ENCODE measurements at regions of chr17 and their contacts with region 1.

Region 1: DNA sequence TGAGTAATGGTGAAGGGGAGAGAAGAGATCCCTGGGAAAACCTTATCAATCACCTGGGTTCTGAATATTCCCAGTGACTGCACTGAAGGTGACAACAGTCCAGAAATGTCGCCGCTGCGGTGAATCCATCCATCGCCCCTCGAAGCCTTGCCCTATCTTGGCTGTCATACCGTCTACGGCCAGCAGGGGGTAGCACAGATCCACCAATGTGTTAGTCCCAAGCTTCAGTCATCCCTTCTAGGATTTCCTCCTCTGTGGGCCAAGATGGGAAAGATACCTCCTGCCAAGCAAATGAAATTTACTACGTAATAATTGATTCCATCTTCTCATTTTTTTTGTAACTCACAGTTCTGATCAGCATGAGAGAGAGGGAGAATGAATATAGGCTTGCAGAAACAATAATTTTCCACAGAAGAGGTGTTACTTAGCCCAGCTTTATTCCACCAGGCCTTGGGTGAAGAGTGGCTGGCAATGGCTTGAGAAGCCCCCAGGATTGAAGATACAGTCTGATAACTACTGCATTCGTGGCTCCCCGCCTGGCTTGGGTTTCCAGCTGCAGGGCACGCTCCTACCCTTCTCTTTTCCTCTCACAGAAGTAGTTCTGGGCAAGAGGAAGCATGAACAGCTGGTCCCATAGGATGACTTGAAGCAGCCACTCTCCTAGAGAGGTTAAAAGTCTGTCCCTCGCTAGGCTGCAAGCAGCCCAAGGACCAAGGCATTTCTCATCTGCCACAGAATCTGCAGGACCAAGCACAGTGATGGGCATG is 2.6 kb upstream of the FMNL1 start:
- DNase-seq: peak; percentile 86 to 92
- H3K4me3 ChIP-seq: no peak overlapping the region
- H3K4me3 Mint-ChIP-seq: no peak overlapping the region
- H3K27ac Mint-ChIP-seq: no peak overlapping the region
- H3K4me1 ChIP-seq: peaks cover 5% of the 10 kb centered on the region; the same call in 1 of the 2 replicates
- H3K4me1 Mint-ChIP-seq: no peaks in the 10 kb centered on the region
- H3K27me3 ChIP-seq: peaks cover 1% of the 10 kb centered on the region; the same call in 1 of the 2 replicates
- H3K27me3 Mint-ChIP-seq: peaks cover 17% of the 10 kb centered on the region
- CTCF ChIP-seq: peak; percentile 88 to 97

Region 2: DNA sequence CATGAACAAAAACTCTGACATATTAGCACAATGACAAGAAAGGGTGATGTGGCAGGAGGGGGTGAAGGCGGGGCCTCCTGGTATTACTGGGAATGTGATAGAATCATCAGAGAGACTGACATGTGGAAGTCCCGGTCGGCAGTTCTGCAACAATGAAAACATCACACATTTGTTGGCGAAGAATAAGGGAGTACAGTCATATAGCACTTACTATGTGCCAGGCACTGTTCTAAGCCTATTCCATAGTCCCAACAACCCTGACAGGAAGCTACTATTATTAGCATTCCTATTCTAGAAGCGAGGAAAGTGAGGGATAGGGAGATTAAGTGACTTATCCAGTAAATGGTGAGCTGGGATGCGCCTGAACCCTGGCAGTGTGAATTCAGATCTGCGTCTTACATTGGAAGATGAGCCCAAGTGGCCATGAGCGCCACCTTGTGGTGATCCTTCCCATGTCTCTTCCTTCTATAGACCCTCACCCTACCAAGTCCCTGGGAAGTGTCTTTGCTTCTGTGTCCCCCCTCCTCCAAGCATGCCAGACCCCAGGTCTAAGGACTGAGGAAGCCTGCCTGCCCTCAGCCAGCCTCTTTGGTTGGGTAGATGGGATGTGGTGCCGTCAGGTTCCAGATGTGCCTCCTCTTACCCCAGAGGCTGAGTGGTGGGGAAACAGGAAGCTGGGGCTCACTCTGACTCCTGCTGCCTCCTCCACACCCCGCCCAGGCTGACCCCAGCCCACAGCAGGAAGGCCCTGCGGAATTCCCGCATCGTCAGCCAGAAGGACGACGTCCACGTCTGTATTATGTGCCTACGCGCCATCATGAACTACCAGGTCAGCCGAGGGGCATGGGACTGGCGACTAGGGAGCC is 16.6 kb after region 1 on chr17:
- CTCF ChIA-PET with region 1: interaction called, 42 read pairs
- POLR2A ChIA-PET with region 1: no interaction called
- intact Hi-C with region 1: loop called (anchors 1 kb)
- DNase-seq: peak; percentile 72 to 77
- H3K4me3 ChIP-seq: no peak overlapping the region
- H3K4me3 Mint-ChIP-seq: no peak overlapping the region
- H3K27ac Mint-ChIP-seq: no peak overlapping the region
- H3K4me1 ChIP-seq: peaks cover 6% of the 10 kb centered on the region; the same call in 1 of the 2 replicates
- H3K4me1 Mint-ChIP-seq: no peaks in the 10 kb centered on the region
- H3K27me3 ChIP-seq: no peaks in the 10 kb centered on the region
- H3K27me3 Mint-ChIP-seq: peaks cover 4% of the 10 kb centered on the region
- CTCF ChIP-seq: peak; percentile 82 to 86

Measured in Caco-2 (cell line).